ENCODE measurements at regions of chr3 and their contacts with region 1.

Region 1: GRCh38 chr3:38235466-38235865 is 30.1 kb upstream of the SLC22A13 start:
- DNase-seq: no peak
- H3K4me3 ChIP-seq: no peak overlapping the region
- H3K27ac ChIP-seq: no peak overlapping the region
- H3K4me1 ChIP-seq: no peaks in the 10 kb centered on the region
- H3K27me3 ChIP-seq: no peaks in the 10 kb centered on the region
- CTCF ChIP-seq: no peak
- POLR2A ChIP-seq: no peak

Region 2: DNA sequence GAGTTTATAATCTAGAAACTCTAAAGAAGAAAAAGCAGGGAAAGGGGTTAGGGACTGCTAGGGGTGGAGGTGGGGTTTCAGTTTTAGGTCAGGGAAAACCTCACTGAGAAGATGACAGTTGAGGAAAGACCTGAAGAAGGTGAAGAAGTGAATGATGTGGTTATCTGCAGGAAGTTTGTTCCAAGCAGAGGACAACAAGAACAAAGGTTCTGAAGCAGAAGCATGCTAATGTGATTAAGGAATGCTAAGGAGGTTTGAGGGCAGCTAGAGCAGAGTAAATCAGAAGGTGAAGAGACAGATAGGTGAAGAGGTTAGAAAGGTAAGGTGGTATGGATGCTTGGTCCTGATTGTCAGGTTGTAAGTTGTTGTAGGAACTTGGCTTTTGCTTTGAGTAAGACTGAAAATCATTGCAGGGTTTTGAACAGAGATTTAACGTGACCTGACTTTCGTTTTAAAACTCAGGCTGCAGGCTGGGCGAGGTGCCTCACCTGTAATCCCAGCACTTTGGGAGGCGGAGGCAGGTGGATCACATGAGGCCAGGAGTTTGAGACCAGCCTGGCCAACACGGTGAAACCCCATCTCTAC is 61.5 kb before region 1 on chr3:
- intact Hi-C with region 1: loop called (anchors 10 kb)
- DNase-seq: no peak
- H3K4me3 ChIP-seq: no peak overlapping the region
- H3K27ac ChIP-seq: no peak overlapping the region
- H3K4me1 ChIP-seq: no peaks in the 10 kb centered on the region
- H3K27me3 ChIP-seq: no peaks in the 10 kb centered on the region
- CTCF ChIP-seq: no peak
- POLR2A ChIP-seq: no peak

Region 3: DNA sequence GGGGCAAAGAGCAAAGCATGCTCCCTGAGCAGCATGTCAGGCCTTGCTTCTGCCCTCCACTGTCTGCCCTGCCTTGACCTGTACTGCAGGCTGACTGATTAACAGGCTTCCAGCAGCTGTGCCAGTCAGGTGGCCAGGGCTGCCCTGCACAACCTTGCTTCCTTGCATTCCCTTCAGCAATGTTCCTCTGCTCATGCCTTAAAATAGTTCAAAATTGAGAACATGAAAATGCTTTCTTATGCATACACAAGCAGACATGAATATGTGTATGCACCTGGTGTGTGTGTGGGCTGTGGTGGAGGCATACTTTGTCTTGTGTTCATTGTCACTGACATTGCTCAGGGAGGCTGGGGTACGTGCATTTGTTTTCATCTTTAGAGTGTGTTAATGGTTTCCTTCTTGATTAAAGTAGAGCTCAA is 28.9 kb after region 1 on chr3:
- intact Hi-C with region 1: no loop called
- DNase-seq: no peak
- H3K4me3 ChIP-seq: no peak overlapping the region
- H3K27ac ChIP-seq: no peak overlapping the region
- H3K4me1 ChIP-seq: no peaks in the 10 kb centered on the region
- H3K27me3 ChIP-seq: no peaks in the 10 kb centered on the region
- CTCF ChIP-seq: no peak
- POLR2A ChIP-seq: no peak

Region 4: DNA sequence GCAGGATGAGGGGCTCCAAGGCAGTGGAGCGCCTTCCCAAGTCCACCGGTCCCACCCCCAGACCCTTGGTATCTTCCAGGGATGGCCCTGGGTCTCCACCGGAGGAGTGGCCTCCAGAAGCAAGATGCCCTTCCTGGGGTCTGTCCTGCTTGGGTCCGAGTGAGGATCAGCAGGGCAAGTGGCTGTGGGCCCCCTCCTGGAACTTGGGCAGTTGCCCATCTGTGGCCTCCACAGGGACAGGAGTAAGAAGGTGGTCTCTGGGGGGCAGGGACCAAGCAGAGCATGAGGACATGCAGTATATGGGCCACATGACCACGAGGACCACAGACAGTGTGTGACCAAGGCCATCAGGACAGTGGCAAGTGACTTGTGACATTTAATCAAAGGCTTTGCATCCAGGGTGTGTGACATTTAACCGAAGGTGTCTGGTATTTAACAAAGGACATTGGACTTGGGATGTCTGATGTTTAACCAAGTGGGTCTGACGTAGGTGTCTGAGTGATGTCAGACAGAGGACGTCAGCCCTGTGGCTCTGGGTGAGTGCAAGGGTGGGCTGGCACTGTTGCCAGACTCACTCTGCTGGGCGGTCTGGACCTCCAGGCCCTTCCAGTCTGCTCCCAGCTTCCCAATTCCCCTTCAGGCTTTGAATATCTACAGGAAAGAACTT is 379.4 kb after region 1 on chr3:
- intact Hi-C with region 1: loop called (anchors 5 kb)
- DNase-seq: no peak
- H3K4me3 ChIP-seq: no peak overlapping the region
- H3K27ac ChIP-seq: no peak overlapping the region
- H3K4me1 ChIP-seq: no peaks in the 10 kb centered on the region
- H3K27me3 ChIP-seq: no peaks in the 10 kb centered on the region
- CTCF ChIP-seq: no peak
- POLR2A ChIP-seq: no peak

Region 5: GRCh38 chr3:38907426-38907825 is 672.0 kb after region 1 on chr3:
- intact Hi-C with region 1: no loop called
- DNase-seq: no peak
- H3K4me3 ChIP-seq: no peak overlapping the region
- H3K27ac ChIP-seq: no peak overlapping the region
- H3K4me1 ChIP-seq: no peaks in the 10 kb centered on the region
- H3K27me3 ChIP-seq: no peaks in the 10 kb centered on the region
- CTCF ChIP-seq: no peak
- POLR2A ChIP-seq: no peak